ENCODE measurements at regions of chr19 and their contacts with region 1.

Region 1: GRCh38 chr19:13104360-13104847 is 1.7 kb upstream of the LYL1 start:
- DNase-seq: peak; percentile 98
- ATAC-seq: peak; percentile 60
- H3K4me3 ChIP-seq: peak overlapping the region; percentile 53 to 98 (median 96)
- H3K4me3 Mint-ChIP-seq: peak overlapping the region; percentile 97
- H3K27ac ChIP-seq: peak overlapping the region; percentile 83 to 100
- H3K27ac Mint-ChIP-seq: peak overlapping the region; percentile 100
- H3K4me1 ChIP-seq: peaks cover 39 to 69% of the 10 kb centered on the region in 2 donors
- H3K4me1 Mint-ChIP-seq: peaks cover 62% of the 10 kb centered on the region
- H3K27me3 ChIP-seq: no peaks in the 10 kb centered on the region
- H3K27me3 Mint-ChIP-seq: no peaks in the 10 kb centered on the region
- CTCF ChIP-seq: peak; percentile 97

Region 2: GRCh38 chr19:13060964-13061927 is 43.2 kb before region 1 on chr19:
- CTCF ChIA-PET with region 1: interaction called, 15 read pairs
- POLR2A ChIA-PET with region 1: interaction called, 6 read pairs
- intact Hi-C with region 1: no loop called
- DNase-seq: peak; percentile 86
- ATAC-seq: peak; percentile 97
- H3K4me3 ChIP-seq: peak overlapping the region; percentile 4 to 60 (median 57)
- H3K4me3 Mint-ChIP-seq: peak overlapping the region; percentile 88
- H3K27ac ChIP-seq: no peak overlapping the region
- H3K27ac Mint-ChIP-seq: peak overlapping the region; percentile 32
- H3K4me1 ChIP-seq: peaks cover 7 to 17% of the 10 kb centered on the region in 2 donors
- H3K4me1 Mint-ChIP-seq: peaks cover 6% of the 10 kb centered on the region
- H3K27me3 ChIP-seq: peaks cover 0 to 22% (median 12%) of the 10 kb centered on the region in 4 experiments
- H3K27me3 Mint-ChIP-seq: peaks cover 21% of the 10 kb centered on the region
- CTCF ChIP-seq: peak; percentile 99

Region 3: DNA sequence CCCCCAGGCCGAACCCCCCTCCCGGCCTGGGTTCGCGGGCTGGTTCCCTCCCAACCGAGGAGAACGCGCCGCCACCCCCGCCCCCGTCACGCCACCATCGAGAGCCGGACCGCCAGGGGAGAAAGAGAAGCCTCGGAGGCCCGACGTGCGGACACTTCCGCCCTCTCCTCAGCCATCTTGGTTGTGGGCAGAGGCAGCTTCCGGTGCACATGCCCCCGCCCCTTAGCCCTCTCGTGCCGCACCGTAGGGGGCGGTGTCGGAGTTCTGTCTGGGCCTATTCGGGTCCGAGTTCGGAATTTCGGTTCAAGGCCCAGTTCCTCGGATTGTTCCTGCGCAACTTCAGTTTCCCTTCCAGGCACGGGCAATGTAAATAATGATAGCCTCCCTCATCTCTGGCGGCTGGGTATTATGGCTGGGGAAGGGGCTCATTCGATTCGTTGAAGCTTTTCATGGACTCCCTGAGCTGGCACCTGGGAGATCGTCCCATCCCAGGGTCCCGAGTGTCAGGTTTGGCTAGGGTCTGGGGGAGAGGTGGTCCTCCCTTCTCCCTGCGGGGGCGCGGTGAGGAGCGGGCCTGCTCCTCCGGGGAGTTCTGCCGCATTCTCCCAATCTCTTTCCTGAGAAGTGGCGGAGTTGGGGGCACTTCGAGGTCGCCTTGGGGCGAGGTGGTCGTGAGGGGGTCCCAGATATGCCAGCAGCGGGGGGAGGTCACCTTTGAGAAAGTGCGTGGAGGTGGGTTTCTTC is 46.0 kb after region 1 on chr19 and contains the starts of genes IER2 and STX10:
- CTCF ChIA-PET with region 1: interaction called, 28 read pairs
- POLR2A ChIA-PET with region 1: interaction called, 45 read pairs
- intact Hi-C with region 1: loop called (anchors 1 kb)
- DNase-seq: peak; percentile 96
- ATAC-seq: peak; percentile 53
- H3K4me3 ChIP-seq: peak within 1 kb of the TSS; percentile 82 to 100 (median 98)
- H3K4me3 Mint-ChIP-seq: peak within 1 kb of the TSS; percentile 92
- H3K27ac ChIP-seq: peak within 1 kb of the TSS; percentile 87 to 96
- H3K27ac Mint-ChIP-seq: peak within 1 kb of the TSS; percentile 94
- H3K4me1 ChIP-seq: peaks cover 9 to 32% of the 10 kb centered on the region in 2 donors
- H3K4me1 Mint-ChIP-seq: peaks cover 33% of the 10 kb centered on the region
- H3K27me3 ChIP-seq: no peaks in the 10 kb centered on the region
- H3K27me3 Mint-ChIP-seq: no peaks in the 10 kb centered on the region
- CTCF ChIP-seq: peak; percentile 66
- total RNA-seq, gene IER2: 181 and 189 TPM in 2 replicates
- total RNA-seq, gene STX10: 48.4 and 59.0 TPM in 2 replicates

Region 4: GRCh38 chr19:13212759-13213330 is 108.4 kb after region 1 on chr19:
- CTCF ChIA-PET with region 1: interaction called, 5 read pairs
- POLR2A ChIA-PET with region 1: interaction called, 3 read pairs
- intact Hi-C with region 1: loop called (anchors 1 kb)
- DNase-seq: peak; percentile 77
- ATAC-seq: no peak
- H3K4me3 ChIP-seq: no peak overlapping the region
- H3K4me3 Mint-ChIP-seq: peak overlapping the region; percentile 44
- H3K27ac ChIP-seq: no peak overlapping the region
- H3K27ac Mint-ChIP-seq: peak overlapping the region; percentile 29
- H3K4me1 ChIP-seq: peaks cover 41 to 54% of the 10 kb centered on the region in 2 donors
- H3K4me1 Mint-ChIP-seq: peaks cover 62% of the 10 kb centered on the region
- H3K27me3 ChIP-seq: no peaks in the 10 kb centered on the region
- H3K27me3 Mint-ChIP-seq: no peaks in the 10 kb centered on the region
- CTCF ChIP-seq: peak; percentile 69

Region 5: DNA sequence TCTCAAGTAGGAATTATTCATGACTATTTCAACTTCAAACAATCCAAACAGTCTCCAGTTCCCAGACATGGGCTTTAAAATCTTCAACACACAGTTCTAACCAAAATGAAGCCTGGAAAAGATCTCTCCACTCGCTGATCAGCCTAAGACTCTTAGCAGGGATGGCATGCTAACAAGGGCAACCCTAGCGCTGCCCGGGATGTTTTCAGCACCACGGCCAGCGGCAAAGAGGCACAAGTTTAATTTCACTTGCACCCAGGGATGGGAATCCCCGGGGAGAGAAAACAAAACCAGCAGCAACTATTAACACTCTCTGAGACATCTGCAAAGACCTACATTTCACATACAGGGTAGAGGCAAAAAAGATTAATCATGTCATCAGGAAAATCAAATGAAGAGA is 358.9 kb after region 1 on chr19:
- CTCF ChIA-PET with region 1: no interaction called
- POLR2A ChIA-PET with region 1: no interaction called
- intact Hi-C with region 1: no loop called
- DNase-seq: no peak
- ATAC-seq: no peak
- H3K4me3 ChIP-seq: no peak overlapping the region
- H3K4me3 Mint-ChIP-seq: no peak overlapping the region
- H3K27ac ChIP-seq: no peak overlapping the region
- H3K27ac Mint-ChIP-seq: no peak overlapping the region
- H3K4me1 ChIP-seq: no peaks in the 10 kb centered on the region
- H3K4me1 Mint-ChIP-seq: no peaks in the 10 kb centered on the region
- H3K27me3 ChIP-seq: no peaks in the 10 kb centered on the region
- H3K27me3 Mint-ChIP-seq: peaks cover 25% of the 10 kb centered on the region
- CTCF ChIP-seq: no peak

Region 6: GRCh38 chr19:13861732-13862531 is 757.5 kb after region 1 on chr19:
- CTCF ChIA-PET with region 1: no interaction called
- POLR2A ChIA-PET with region 1: interaction called, 7 read pairs
- intact Hi-C with region 1: loop called (anchors 5 kb)
- DNase-seq: peak; percentile 92
- ATAC-seq: peak; percentile 83
- H3K4me3 ChIP-seq: peak overlapping the region; percentile 50 to 69 (median 61)
- H3K4me3 Mint-ChIP-seq: peak overlapping the region; percentile 91
- H3K27ac ChIP-seq: peak overlapping the region; percentile 34 to 78
- H3K27ac Mint-ChIP-seq: peak overlapping the region; percentile 85
- H3K4me1 ChIP-seq: peaks cover 26 to 28% of the 10 kb centered on the region in 2 donors
- H3K4me1 Mint-ChIP-seq: peaks cover 29% of the 10 kb centered on the region
- H3K27me3 ChIP-seq: peaks cover 0 to 34% (median 17%) of the 10 kb centered on the region in 4 experiments
- H3K27me3 Mint-ChIP-seq: peaks cover 25% of the 10 kb centered on the region
- CTCF ChIP-seq: peak; percentile 97

Measured in B cell (primary cell).